Activated T-helper 2 cell treated with anti-CD3 and anti-CD28 coated beads, Interferon-gamma antibody, Interleukin-2, Interleukin-4, amounts not matched to agents 10 μg/mL and 5 μg/mL and 100 μg/mL, durations not matched to agents 14 hours and 24 hours and 36 hours (primary cell): ENCODE measurements at regions of chr15 and their contacts with region 1.

Region 1: GRCh38 chr15:91852741-91853510 is 582 bp upstream of the SLCO3A1 start:
- DNase-seq: peak; percentile 73
- H3K4me3 Mint-ChIP-seq: peak overlapping the region; percentile 84
- H3K27ac Mint-ChIP-seq: peak overlapping the region; percentile 89
- H3K4me1 Mint-ChIP-seq: peaks cover 52% of the 10 kb centered on the region
- H3K27me3 Mint-ChIP-seq: peaks cover 6% of the 10 kb centered on the region

Region 2: GRCh38 chr15:91308199-91308598 is 544.7 kb before region 1 on chr15:
- intact Hi-C with region 1: loop called (anchors 5 kb)
- DNase-seq: no peak
- H3K4me3 Mint-ChIP-seq: no peak overlapping the region
- H3K27ac Mint-ChIP-seq: no peak overlapping the region
- H3K4me1 Mint-ChIP-seq: peaks cover 34% of the 10 kb centered on the region
- H3K27me3 Mint-ChIP-seq: peaks cover 63% of the 10 kb centered on the region

Region 3: GRCh38 chr15:91769894-91770293 is 83.0 kb before region 1 on chr15:
- intact Hi-C with region 1: no loop called
- DNase-seq: no peak
- H3K4me3 Mint-ChIP-seq: no peak overlapping the region
- H3K27ac Mint-ChIP-seq: no peak overlapping the region
- H3K4me1 Mint-ChIP-seq: no peaks in the 10 kb centered on the region
- H3K27me3 Mint-ChIP-seq: peaks cover 9% of the 10 kb centered on the region

Region 4: DNA sequence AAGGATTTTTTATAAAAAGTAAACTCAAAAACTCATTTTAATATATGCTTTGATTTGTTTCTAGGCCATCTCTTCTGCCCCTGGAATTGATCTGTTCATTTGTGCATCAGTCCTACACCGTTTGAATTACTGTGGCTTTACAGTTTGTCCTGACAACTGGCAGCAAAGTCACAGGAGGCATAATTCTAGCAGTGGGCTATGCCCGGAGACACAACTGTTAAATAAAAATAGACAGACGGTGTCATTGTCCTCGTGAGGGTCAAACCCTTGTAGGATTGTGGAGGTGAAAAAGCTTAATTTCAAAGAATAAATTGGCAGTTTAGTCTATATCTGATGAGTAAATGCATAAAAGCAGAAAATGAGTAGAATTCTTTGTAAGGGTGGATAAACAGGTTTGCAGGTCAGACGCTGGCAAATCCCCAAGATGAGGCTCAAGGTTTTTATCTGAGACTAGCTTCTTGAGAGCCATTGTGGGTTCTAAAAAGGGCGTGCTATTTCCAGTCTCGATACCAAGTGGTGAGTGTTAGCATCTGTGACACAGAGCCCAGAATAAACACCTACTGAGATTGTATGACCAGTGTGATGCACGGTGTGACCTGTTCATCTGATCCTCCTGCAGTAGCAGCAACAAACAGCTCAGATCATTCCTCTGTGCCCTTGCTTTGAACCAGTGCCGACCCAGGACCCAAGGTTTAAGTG is 50.9 kb before region 1 on chr15:
- intact Hi-C with region 1: loop called (anchors 5 kb)
- DNase-seq: no peak
- H3K4me3 Mint-ChIP-seq: no peak overlapping the region
- H3K27ac Mint-ChIP-seq: peak overlapping the region; percentile 47
- H3K4me1 Mint-ChIP-seq: peaks cover 24% of the 10 kb centered on the region
- H3K27me3 Mint-ChIP-seq: peaks cover 3% of the 10 kb centered on the region

Region 5: GRCh38 chr15:91956026-91956723 is 103.2 kb after region 1 on chr15:
- intact Hi-C with region 1: no loop called
- DNase-seq: no peak
- H3K4me3 Mint-ChIP-seq: no peak overlapping the region
- H3K27ac Mint-ChIP-seq: no peak overlapping the region
- H3K4me1 Mint-ChIP-seq: peaks cover 27% of the 10 kb centered on the region
- H3K27me3 Mint-ChIP-seq: no peaks in the 10 kb centered on the region

Region 6: DNA sequence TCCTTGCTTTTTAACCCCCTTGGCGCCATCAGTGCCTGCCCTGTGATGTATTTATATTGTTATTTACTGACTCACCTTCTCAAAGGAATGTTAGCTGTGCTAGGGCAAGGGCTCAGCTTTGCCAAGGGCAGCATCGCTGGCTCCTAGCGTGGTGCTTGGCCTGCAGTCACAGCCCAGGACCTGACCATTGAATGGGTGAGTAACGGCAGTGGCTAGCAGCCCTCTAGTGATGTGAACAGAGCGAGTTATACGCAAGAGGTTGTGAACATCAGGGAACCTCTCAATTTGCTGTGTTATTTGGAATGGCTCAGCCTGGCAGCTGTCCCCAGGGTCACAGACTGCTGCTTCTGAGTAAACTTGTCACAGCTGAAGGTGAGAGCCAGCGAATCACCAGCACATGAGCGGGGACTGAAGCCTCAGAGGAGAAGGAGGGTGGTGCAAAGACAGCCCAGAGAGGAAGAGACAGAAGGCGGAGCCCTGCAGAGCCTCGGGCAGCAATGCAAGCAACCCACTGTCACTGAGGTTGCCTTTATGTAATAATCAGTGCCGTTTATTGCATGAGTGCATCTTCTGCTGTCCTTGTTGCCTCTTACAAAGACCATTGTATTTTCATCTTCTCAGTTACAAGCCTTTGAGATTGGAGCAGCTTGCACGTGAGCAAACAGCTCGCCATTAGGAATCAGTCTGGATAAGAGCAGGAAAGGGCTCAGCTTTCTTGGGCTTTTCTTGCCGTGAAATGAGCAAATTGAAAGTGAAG is 158.9 kb after region 1 on chr15:
- intact Hi-C with region 1: loop called (anchors 5 kb)
- DNase-seq: peak; percentile 9
- H3K4me3 Mint-ChIP-seq: peak overlapping the region; percentile 44
- H3K27ac Mint-ChIP-seq: peak overlapping the region; percentile 57
- H3K4me1 Mint-ChIP-seq: peaks cover 53% of the 10 kb centered on the region
- H3K27me3 Mint-ChIP-seq: no peaks in the 10 kb centered on the region

Region 7: DNA sequence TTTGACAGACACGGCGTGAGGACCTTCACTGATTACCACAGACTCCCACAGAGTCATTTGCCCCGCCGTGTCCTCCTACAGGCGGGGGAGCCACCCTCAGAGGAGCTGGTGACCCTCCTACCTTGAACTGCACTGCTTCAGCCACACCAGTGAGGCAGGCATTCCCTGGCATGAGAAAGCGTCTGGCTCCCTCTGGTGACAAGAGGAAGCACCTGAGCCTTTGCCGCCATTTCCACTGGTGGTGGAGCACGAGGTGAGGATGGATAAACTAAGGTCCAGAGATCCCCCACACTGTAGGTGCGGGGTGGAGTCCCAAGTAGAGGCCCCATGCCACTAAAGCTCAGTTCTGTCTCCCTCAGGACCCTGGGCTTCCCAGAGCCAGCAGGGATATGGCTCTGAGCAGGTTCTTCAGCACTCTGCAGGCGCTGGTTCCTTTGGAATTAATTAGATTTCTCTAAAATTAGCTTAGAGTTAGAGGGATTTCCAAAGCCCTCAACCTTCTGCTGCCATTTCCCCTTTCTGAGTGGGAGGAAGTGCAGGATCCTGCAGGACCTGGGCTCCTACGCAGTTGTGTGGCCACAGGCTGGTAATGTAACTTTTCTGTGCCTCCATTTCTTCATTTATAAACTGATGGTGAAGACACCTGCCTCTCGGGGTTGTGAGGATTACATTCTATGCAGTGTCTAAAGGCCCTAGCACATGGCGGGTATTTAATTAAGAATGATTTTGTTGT is 224.6 kb after region 1 on chr15:
- intact Hi-C with region 1: loop called (anchors 1 kb)
- DNase-seq: peak; percentile 37
- H3K4me3 Mint-ChIP-seq: no peak overlapping the region
- H3K27ac Mint-ChIP-seq: no peak overlapping the region
- H3K4me1 Mint-ChIP-seq: peaks cover 32% of the 10 kb centered on the region
- H3K27me3 Mint-ChIP-seq: no peaks in the 10 kb centered on the region